ENCODE measurements at regions of chr22 and their contacts with region 1.

Region 1: DNA sequence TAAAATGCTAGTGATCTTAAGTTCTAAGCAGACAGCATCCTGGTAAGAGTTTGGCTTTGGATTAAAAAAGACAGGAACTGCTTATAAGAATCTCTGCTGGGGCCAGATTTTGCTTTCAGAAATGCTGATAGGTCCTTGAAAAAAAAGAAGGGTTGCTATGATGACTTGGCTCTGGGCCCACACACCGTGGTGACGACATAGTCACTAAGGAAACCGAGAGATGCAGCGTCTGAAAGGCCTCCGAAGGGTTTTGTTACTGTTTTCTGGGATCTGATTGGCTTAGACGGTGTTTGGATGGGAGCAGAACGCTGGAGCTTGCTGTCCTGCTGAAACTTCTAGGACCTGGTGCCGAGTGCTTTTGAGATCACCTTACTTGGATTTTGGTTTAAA is 8.4 kb downstream of the FAM118A start:
- DNase-seq: peak; percentile 78 to 98 (median 90)
- ATAC-seq: peak; percentile 65
- H3K4me3 ChIP-seq: peak overlapping the region; percentile 30 to 38
- H3K4me3 Mint-ChIP-seq: peak overlapping the region; percentile 81
- H3K27ac ChIP-seq: peak overlapping the region; percentile 97 to 98
- H3K27ac Mint-ChIP-seq: peak overlapping the region; percentile 100
- H3K4me1 ChIP-seq: peaks cover 34% of the 10 kb centered on the region
- H3K4me1 Mint-ChIP-seq: peaks cover 74% of the 10 kb centered on the region
- H3K27me3 ChIP-seq: no peaks in the 10 kb centered on the region
- H3K27me3 Mint-ChIP-seq: no peaks in the 10 kb centered on the region
- CTCF ChIP-seq: no peak

Region 2: GRCh38 chr22:45163451-45164269 is 154.5 kb before region 1 on chr22 and contains the start of gene NUP50:
- CTCF ChIA-PET with region 1: no interaction called
- POLR2A ChIA-PET with region 1: no interaction called
- intact Hi-C with region 1: loop called (anchors 2 to 5 kb)
- DNase-seq: peak; percentile 92 to 99 (median 96)
- ATAC-seq: peak; percentile 83
- H3K4me3 ChIP-seq: peak within 1 kb of the TSS; percentile 86 to 90
- H3K4me3 Mint-ChIP-seq: peak within 1 kb of the TSS; percentile 92
- H3K27ac ChIP-seq: peak within 1 kb of the TSS; percentile 86 to 88
- H3K27ac Mint-ChIP-seq: peak within 1 kb of the TSS; percentile 93
- H3K4me1 ChIP-seq: peaks cover 38% of the 10 kb centered on the region
- H3K4me1 Mint-ChIP-seq: peaks cover 65% of the 10 kb centered on the region
- H3K27me3 ChIP-seq: no peaks in the 10 kb centered on the region
- H3K27me3 Mint-ChIP-seq: no peaks in the 10 kb centered on the region
- CTCF ChIP-seq: no peak
- total RNA-seq, gene NUP50: 133 to 134 TPM

Region 3: GRCh38 chr22:45253039-45253641 is 65.0 kb before region 1 on chr22:
- CTCF ChIA-PET with region 1: no interaction called
- POLR2A ChIA-PET with region 1: no interaction called
- intact Hi-C with region 1: no loop called
- DNase-seq: no peak
- ATAC-seq: no peak
- H3K4me3 ChIP-seq: no peak overlapping the region
- H3K4me3 Mint-ChIP-seq: no peak overlapping the region
- H3K27ac ChIP-seq: no peak overlapping the region
- H3K27ac Mint-ChIP-seq: peak overlapping the region; percentile 41
- H3K4me1 ChIP-seq: peaks cover 5% of the 10 kb centered on the region
- H3K4me1 Mint-ChIP-seq: peaks cover 26% of the 10 kb centered on the region
- H3K27me3 ChIP-seq: no peaks in the 10 kb centered on the region
- H3K27me3 Mint-ChIP-seq: no peaks in the 10 kb centered on the region
- CTCF ChIP-seq: no peak

Region 4: DNA sequence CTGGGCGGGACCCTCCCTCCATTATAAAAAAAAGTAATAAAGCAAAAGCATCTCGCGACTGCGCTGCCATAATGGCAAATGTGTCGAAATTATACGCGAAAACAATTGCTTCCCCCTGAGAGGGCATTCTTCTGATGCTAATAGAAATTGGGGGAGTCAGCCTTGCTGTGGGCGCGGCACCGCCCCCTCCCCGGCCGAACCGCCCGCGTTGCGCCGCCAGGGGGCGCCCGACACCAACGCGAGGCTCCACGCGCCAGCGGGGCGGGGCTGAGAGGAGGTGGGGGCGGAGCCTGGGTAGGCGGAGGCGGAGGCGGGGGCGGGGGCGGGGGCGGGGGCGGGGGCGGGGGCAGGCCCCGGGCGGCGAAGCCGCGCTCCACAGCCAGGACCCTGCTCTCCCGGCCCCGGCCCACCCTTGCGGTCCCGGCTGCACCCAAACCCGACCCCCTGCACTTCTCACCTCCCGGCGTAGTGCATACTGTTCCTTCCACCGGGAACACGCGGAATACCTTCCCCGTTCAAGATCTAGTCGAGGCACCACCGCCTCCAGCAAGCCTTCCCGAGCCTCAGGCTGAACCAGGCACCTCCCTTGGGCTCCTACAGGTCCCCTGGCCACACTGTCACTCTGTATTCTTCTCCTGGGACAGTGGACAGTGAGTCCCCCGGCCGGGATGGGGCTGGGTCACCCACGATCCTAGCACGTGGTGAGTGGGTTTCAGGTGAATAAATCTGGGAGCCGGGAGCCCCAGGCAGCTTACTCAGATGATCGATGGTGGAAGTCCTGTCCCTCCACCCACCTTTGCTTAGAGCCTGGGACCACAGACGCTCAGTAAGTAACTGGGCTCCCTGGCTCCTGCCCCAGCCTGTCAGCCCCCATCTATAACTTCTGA is 49.0 kb before region 1 on chr22:
- CTCF ChIA-PET with region 1: no interaction called
- POLR2A ChIA-PET with region 1: no interaction called
- intact Hi-C with region 1: loop called (anchors 1 kb)
- DNase-seq: peak; percentile 84 to 97 (median 92)
- ATAC-seq: peak; percentile 97
- H3K4me3 ChIP-seq: peak overlapping the region; percentile 59 to 67
- H3K4me3 Mint-ChIP-seq: peak overlapping the region; percentile 83
- H3K27ac ChIP-seq: no peak overlapping the region
- H3K27ac Mint-ChIP-seq: no peak overlapping the region
- H3K4me1 ChIP-seq: peaks cover 10% of the 10 kb centered on the region
- H3K4me1 Mint-ChIP-seq: peaks cover 9% of the 10 kb centered on the region
- H3K27me3 ChIP-seq: peaks cover 0 to 8% of the 10 kb centered on the region in 2 experiments
- H3K27me3 Mint-ChIP-seq: peaks cover 6% of the 10 kb centered on the region
- CTCF ChIP-seq: peak; percentile 85

Region 5: DNA sequence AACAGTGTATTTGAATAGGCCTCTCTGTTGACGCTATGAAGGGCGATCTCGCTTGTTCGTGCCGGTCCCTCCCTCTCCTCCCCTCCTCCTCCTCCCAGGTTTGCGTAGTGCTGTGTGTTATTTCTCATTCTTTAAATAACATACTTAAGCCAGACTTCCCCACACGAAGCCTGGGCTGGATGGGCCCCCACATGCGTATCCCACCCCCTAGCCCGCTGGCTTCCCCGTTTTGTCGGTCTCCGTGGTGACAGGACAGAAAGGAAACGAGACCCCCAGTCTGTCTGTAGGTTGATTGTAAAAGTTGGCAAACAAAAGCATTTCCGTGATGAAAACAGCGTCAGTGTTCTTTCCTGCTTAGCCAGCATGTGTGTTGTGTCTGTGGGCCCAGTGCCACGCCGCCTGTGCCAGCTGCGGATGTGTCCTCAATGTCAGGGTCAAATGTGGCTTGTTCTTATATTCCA is 18.8 kb after region 1 on chr22:
- CTCF ChIA-PET with region 1: no interaction called
- POLR2A ChIA-PET with region 1: interaction called, 3 read pairs
- intact Hi-C with region 1: loop called (anchors 1 kb)
- DNase-seq: peak in 6 of 9 experiments; percentile 21 to 87 (median 64)
- ATAC-seq: peak; percentile 69
- H3K4me3 ChIP-seq: no peak overlapping the region
- H3K4me3 Mint-ChIP-seq: peak overlapping the region; percentile 47
- H3K27ac ChIP-seq: peak overlapping the region; percentile 23 to 30
- H3K27ac Mint-ChIP-seq: peak overlapping the region; percentile 93
- H3K4me1 ChIP-seq: peaks cover 43% of the 10 kb centered on the region
- H3K4me1 Mint-ChIP-seq: peaks cover 47% of the 10 kb centered on the region
- H3K27me3 ChIP-seq: no peaks in the 10 kb centered on the region
- H3K27me3 Mint-ChIP-seq: no peaks in the 10 kb centered on the region
- CTCF ChIP-seq: no peak

Region 6: GRCh38 chr22:45413368-45414211 is 95.4 kb after region 1 on chr22 and contains the starts of genes RIBC2 and SMC1B:
- CTCF ChIA-PET with region 1: interaction called, 5 read pairs
- POLR2A ChIA-PET with region 1: no interaction called
- intact Hi-C with region 1: loop called (anchors 1 to 5 kb)
- DNase-seq: peak; percentile 58 to 89 (median 78)
- ATAC-seq: peak; percentile 88
- H3K4me3 ChIP-seq: peak within 1 kb of the TSS; percentile 39 to 57
- H3K4me3 Mint-ChIP-seq: peak within 1 kb of the TSS; percentile 84
- H3K27ac ChIP-seq: peak within 1 kb of the TSS in 1 of 2 experiments; percentile 70
- H3K27ac Mint-ChIP-seq: peak within 1 kb of the TSS; percentile 38
- H3K4me1 ChIP-seq: peaks cover 9% of the 10 kb centered on the region
- H3K4me1 Mint-ChIP-seq: peaks cover 15% of the 10 kb centered on the region
- H3K27me3 ChIP-seq: no peaks in the 10 kb centered on the region
- H3K27me3 Mint-ChIP-seq: no peaks in the 10 kb centered on the region
- CTCF ChIP-seq: no peak
- total RNA-seq, gene RIBC2: 0.67 to 0.98 TPM
- total RNA-seq, gene SMC1B: not detected